ENCODE measurements at regions of chr1 and their contacts with region 1.

Region 1: DNA sequence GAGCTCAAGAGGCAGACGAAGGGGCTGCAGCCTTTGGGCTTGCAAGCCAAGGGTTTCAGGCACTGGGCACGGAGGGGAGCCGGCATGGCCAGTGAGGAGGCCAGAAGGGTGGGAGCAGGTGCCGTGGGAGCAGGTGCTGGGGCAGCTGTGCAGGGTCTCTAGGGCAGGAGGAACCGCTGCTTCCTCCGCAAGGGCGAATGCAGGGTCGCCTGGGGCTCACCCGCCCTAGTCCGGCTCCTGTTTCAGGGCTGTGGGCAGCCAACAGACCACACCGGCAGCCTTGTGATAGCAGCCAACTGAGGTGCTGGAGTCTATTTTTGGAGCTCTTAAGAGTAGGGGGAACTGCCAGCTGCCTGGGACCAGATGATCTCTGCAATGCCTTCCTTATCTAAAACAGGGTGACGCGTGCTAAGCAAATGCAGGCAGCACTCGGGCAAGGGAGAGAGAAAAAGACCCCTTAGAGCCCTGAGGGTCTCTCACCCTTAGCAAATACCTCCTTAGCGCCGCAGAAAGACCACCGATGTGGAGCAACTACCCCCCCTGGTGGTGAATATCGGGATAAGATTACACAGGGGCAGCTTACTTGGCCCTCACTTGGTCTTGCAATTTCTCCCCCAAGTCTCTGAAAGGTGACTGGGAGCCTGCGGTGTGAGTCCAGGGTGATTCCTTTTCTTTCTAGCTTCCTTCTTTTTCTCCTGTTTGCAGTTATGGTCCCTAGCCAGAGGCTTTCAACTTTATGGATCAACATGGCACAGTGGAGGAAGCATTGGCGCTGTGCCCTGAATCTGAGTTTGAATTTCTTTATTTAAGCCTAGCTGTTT is 20.7 kb upstream of the MAPKAPK2 start:
- DNase-seq: peak; percentile 86
- ATAC-seq: peak; percentile 80
- H3K4me3 ChIP-seq: peak overlapping the region in 2 of 5 experiments; percentile 31 to 34
- H3K4me3 Mint-ChIP-seq: peak overlapping the region; percentile 64
- H3K27ac ChIP-seq: no peak overlapping the region
- H3K27ac Mint-ChIP-seq: no peak overlapping the region
- H3K4me1 ChIP-seq: peaks cover 14 to 16% of the 10 kb centered on the region in 2 donors
- H3K4me1 Mint-ChIP-seq: peaks cover 24% of the 10 kb centered on the region
- H3K27me3 ChIP-seq: peaks cover 0 to 48% (median 15%) of the 10 kb centered on the region in 4 experiments
- H3K27me3 Mint-ChIP-seq: peaks cover 40% of the 10 kb centered on the region
- CTCF ChIP-seq: peak; percentile 89

Region 2: GRCh38 chr1:206496131-206496793 is 167.8 kb before region 1 on chr1:
- CTCF ChIA-PET with region 1: interaction called, 26 read pairs
- POLR2A ChIA-PET with region 1: no interaction called
- intact Hi-C with region 1: no loop called
- DNase-seq: peak; percentile 46
- ATAC-seq: peak; percentile 44
- H3K4me3 ChIP-seq: peak overlapping the region in 1 of 5 experiments; percentile 3
- H3K4me3 Mint-ChIP-seq: peak overlapping the region; percentile 68
- H3K27ac ChIP-seq: peak overlapping the region; percentile 28 to 67
- H3K27ac Mint-ChIP-seq: peak overlapping the region; percentile 83
- H3K4me1 ChIP-seq: peaks cover 32 to 37% of the 10 kb centered on the region in 2 donors
- H3K4me1 Mint-ChIP-seq: peaks cover 43% of the 10 kb centered on the region
- H3K27me3 ChIP-seq: no peaks in the 10 kb centered on the region
- H3K27me3 Mint-ChIP-seq: no peaks in the 10 kb centered on the region
- CTCF ChIP-seq: no peak

Region 3: GRCh38 chr1:206651958-206652890 is 11.8 kb before region 1 on chr1:
- CTCF ChIA-PET with region 1: interaction called, 81 read pairs
- POLR2A ChIA-PET with region 1: no interaction called
- intact Hi-C with region 1: no loop called
- DNase-seq: no peak
- ATAC-seq: no peak
- H3K4me3 ChIP-seq: no peak overlapping the region
- H3K4me3 Mint-ChIP-seq: no peak overlapping the region
- H3K27ac ChIP-seq: no peak overlapping the region
- H3K27ac Mint-ChIP-seq: no peak overlapping the region
- H3K4me1 ChIP-seq: peaks cover 0 to under 1% of the 10 kb centered on the region in 2 donors
- H3K4me1 Mint-ChIP-seq: peaks cover under 1% of the 10 kb centered on the region
- H3K27me3 ChIP-seq: peaks cover 0 to 6% (median under 1%) of the 10 kb centered on the region in 4 experiments
- H3K27me3 Mint-ChIP-seq: peaks cover 4% of the 10 kb centered on the region
- CTCF ChIP-seq: no peak

Region 4: DNA sequence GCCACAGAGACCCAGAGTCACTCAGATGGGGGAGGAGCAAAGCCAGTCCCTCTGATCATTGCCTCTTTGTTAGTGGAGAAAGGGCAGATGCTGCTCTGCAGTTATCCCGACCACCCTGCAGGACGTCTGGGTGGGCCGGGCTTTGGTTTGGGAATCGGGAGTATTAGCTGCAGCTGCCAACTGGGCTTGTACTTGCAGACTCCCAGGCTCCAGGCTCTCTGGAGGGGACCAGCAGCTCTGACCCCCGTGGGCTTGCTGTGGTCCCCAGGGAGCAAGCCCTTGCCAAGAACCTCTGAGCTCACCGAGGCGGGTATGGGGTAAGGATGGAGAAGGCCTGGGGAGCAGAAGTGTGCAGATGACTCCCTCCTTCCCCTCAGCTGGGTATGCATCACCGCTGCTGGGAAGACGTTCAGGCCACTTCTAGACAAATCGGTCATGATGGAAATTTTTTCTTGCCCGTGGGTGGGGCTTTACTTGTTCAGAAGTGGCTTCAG is 42.3 kb after region 1 on chr1:
- CTCF ChIA-PET with region 1: interaction called, 46 read pairs
- POLR2A ChIA-PET with region 1: no interaction called
- intact Hi-C with region 1: no loop called
- DNase-seq: no peak
- ATAC-seq: no peak
- H3K4me3 ChIP-seq: no peak overlapping the region
- H3K4me3 Mint-ChIP-seq: peak overlapping the region; percentile 29
- H3K27ac ChIP-seq: no peak overlapping the region
- H3K27ac Mint-ChIP-seq: peak overlapping the region; percentile 57
- H3K4me1 ChIP-seq: peaks cover 79 to 80% of the 10 kb centered on the region in 2 donors
- H3K4me1 Mint-ChIP-seq: peaks cover 90% of the 10 kb centered on the region
- H3K27me3 ChIP-seq: no peaks in the 10 kb centered on the region
- H3K27me3 Mint-ChIP-seq: no peaks in the 10 kb centered on the region
- CTCF ChIP-seq: no peak

Region 5: DNA sequence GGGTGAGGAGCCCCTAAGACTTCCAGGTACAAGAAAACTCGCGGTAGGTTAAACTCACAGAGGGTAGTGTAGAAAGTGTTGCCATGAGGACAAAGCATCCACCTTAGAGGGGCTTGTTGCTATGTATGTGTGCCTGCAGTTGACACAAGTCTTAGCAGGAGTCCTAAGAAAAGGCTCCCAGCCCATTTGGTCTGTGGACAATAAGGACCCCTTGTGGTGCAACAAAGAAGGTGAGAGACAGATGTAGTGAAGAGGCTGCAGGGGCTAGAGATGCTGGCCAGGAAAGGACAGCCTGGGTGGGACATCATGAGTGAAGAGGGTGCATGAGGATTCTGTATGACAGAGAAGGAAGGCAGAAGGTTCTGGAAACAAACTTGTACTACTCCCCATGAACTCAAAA is 144.6 kb after region 1 on chr1:
- CTCF ChIA-PET with region 1: interaction called, 21 read pairs
- POLR2A ChIA-PET with region 1: no interaction called
- intact Hi-C with region 1: no loop called
- DNase-seq: peak; percentile 62
- ATAC-seq: peak; percentile 81
- H3K4me3 ChIP-seq: no peak overlapping the region
- H3K4me3 Mint-ChIP-seq: no peak overlapping the region
- H3K27ac ChIP-seq: no peak overlapping the region
- H3K27ac Mint-ChIP-seq: no peak overlapping the region
- H3K4me1 ChIP-seq: peaks cover 8 to 12% of the 10 kb centered on the region in 2 donors
- H3K4me1 Mint-ChIP-seq: peaks cover 27% of the 10 kb centered on the region
- H3K27me3 ChIP-seq: no peaks in the 10 kb centered on the region
- H3K27me3 Mint-ChIP-seq: no peaks in the 10 kb centered on the region
- CTCF ChIP-seq: peak; percentile 50

Measured in B cell (primary cell).